CD4-positive, alpha-beta memory T cell (primary cell): ENCODE measurements at regions of chr9 and their contacts with region 1.

Region 1: DNA sequence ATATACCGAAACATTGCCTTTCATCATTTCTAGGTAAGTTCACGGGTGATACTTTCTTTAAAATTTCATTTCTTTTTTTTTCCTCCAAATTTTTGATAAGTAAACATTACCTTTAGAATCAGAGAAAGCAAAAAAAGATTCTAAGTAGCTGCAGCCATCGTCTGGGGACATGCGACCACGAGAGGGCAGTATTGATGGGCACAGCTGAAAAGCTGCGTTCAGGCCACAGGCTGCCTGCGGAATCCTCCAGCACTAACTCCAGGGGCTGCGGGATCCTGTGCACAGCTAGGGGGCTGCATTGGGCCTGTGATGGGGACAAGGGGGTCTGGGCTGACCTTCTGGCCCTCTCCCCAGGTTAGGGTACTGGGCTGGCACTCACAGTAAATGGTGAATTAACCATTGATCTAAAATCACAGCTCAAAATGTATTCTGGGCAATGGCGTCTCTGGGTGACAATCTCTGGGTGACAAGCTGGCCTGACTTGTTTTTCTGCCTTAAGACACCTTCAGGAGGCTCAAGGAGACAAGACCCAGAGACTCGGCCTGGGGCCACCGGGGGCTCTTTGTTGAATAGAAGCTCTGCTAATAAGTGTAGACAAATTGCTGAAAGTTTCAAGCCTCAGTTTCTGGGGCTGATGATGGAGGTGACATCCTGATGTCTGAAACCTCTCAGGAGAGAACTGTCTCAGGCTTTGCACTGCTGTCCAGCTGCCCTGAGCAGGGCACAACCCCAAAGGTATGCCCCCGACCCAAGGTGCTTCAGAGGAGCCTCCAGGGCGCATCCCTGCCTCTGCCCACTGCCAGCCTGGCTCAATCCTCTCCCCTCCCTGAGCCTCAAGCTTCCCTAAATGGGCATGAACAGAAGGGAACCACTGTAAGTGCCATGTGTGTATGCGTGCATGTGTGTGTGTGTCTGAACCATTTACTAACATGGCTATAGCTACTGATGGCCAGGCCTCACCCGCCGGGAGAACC is 44.3 kb upstream of the SARDH start:
- DNase-seq: peak; percentile 41 to 52 (median 47)
- H3K4me3 ChIP-seq: no peak overlapping the region
- H3K4me3 Mint-ChIP-seq: peak overlapping the region in 1 of 8 donors; percentile 20
- H3K27ac ChIP-seq: no peak overlapping the region
- H3K27ac Mint-ChIP-seq: no peak overlapping the region
- H3K4me1 ChIP-seq: no peaks in the 10 kb centered on the region
- H3K4me1 Mint-ChIP-seq: no peaks in the 10 kb centered on the region
- H3K27me3 ChIP-seq: no peaks in the 10 kb centered on the region
- H3K27me3 Mint-ChIP-seq: peaks cover 0 to 2% of the 10 kb centered on the region in 2 donors

Region 2: GRCh38 chr9:133768859-133769425 is 13.5 kb before region 1 on chr9:
- CTCF ChIA-PET with region 1: interaction called, 11 read pairs
- POLR2A ChIA-PET with region 1: no interaction called
- intact Hi-C with region 1: no loop called
- DNase-seq: no peak
- H3K4me3 ChIP-seq: no peak overlapping the region
- H3K4me3 Mint-ChIP-seq: no peak overlapping the region
- H3K27ac ChIP-seq: no peak overlapping the region
- H3K27ac Mint-ChIP-seq: no peak overlapping the region
- H3K4me1 ChIP-seq: no peaks in the 10 kb centered on the region
- H3K4me1 Mint-ChIP-seq: no peaks in the 10 kb centered on the region
- H3K27me3 ChIP-seq: no peaks in the 10 kb centered on the region
- H3K27me3 Mint-ChIP-seq: peaks cover 0 to 4% of the 10 kb centered on the region in 2 donors

Region 3: DNA sequence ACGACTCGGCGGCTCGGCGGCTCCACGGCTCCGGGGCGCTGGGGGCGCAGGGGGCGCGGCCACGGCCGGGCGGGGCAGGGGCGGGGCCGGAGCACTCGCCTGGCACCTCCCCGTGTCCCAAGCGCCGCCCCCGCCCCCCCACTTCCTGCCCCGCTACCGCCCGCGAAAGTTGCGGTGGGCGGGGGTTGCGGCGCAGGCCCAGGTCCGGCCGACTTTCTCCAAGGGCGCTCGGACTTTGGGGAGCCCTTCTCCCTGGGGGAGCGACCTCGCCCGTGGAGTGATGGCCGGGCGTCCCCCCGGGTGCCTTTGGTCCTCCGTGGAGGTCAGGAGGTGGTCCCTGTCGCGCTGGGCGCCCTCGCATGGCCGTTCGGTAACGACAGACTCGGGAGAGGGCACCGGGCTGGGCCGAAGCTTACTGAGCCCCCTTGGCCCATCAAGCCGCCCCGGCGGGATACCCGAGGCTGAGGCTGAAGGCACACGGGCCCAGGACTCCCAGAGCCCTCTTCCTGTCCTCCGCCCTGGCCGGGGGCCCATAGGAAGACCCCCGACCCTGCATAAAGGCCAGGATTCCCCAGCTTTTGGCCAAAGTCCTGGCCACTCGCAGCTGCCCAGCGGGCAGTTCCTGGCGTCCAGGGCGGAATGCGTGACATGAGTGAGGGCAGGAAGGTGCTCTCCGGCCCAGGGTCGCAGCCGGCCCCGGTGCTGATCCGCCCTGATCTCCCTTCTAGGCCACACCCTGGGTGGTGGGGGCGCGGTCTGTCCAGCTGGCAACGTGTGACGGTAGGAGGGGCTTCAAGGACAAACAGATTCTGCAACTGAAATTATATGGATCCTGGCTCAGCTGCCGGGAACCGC is 210.6 kb after region 1 on chr9:
- CTCF ChIA-PET with region 1: interaction called, 101 read pairs
- POLR2A ChIA-PET with region 1: interaction called, 4 read pairs
- intact Hi-C with region 1: no loop called
- DNase-seq: peak; percentile 58 to 67 (median 60)
- H3K4me3 ChIP-seq: peak overlapping the region; percentile 47 to 58
- H3K4me3 Mint-ChIP-seq: peak overlapping the region; percentile 73 to 83 (median 80)
- H3K27ac ChIP-seq: no peak overlapping the region
- H3K27ac Mint-ChIP-seq: peak overlapping the region in 1 of 7 donors; percentile 35
- H3K4me1 ChIP-seq: peaks cover 16% of the 10 kb centered on the region
- H3K4me1 Mint-ChIP-seq: peaks cover 1 to 16% (median 5%) of the 10 kb centered on the region in 4 donors
- H3K27me3 ChIP-seq: no peaks in the 10 kb centered on the region
- H3K27me3 Mint-ChIP-seq: peaks cover 0 to 6% of the 10 kb centered on the region in 2 donors

Region 4: DNA sequence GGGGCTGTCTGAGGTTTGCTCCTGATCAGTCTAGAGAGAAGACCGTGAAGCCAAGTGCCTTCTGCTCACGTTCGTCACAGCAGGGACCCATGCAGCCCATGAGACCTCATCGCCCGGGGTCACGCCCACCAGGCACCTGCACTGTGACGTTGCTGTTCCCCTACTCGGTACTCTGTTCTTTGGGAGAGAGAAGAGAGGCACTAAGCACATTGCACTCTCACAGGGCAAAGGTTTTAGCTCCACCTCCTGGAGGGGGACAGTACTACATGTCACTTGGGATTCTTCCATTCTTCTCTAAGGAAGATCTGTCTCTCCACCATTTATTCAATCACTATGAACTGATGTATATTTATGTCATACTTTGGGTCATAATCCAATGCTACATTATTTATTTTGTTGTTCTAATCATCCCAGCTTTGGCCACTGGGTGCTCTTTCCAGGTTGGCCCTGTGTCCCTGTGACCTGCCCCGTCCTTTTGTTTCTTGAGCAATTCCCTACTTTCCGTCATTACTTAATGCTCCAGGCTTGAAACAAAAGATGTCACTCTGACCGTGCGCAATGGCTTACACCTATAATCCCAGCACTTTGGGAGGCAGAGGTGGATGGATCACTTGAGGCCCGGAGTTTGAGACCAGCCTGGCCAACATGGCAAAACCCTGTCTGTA is 316.8 kb after region 1 on chr9:
- CTCF ChIA-PET with region 1: interaction called, 14 read pairs
- POLR2A ChIA-PET with region 1: no interaction called
- intact Hi-C with region 1: loop called (anchors 1 kb)
- DNase-seq: peak; percentile 51 to 62 (median 55)
- H3K4me3 ChIP-seq: no peak overlapping the region
- H3K4me3 Mint-ChIP-seq: no peak overlapping the region
- H3K27ac ChIP-seq: no peak overlapping the region
- H3K27ac Mint-ChIP-seq: no peak overlapping the region
- H3K4me1 ChIP-seq: no peaks in the 10 kb centered on the region
- H3K4me1 Mint-ChIP-seq: peaks cover 0 to 3% (median 0%) of the 10 kb centered on the region in 4 donors
- H3K27me3 ChIP-seq: no peaks in the 10 kb centered on the region
- H3K27me3 Mint-ChIP-seq: peaks cover 16 to 18% of the 10 kb centered on the region in 2 donors